Gastrocnemius medialis (tissue), 4 donors: ENCODE measurements at regions of chr1 and their contacts with region 1.

Region 1: GRCh38 chr1:150561974-150562445 is 12.8 kb downstream of the ADAMTSL4 start:
- DNase-seq: peak; percentile 94
- ATAC-seq: peak; percentile 54 to 63
- H3K4me3 ChIP-seq: peak overlapping the region; percentile 68 to 75 (median 71)
- H3K27ac ChIP-seq: peak overlapping the region; percentile 100
- H3K4me1 ChIP-seq: peaks cover 69 to 70% of the 10 kb centered on the region in 2 donors
- H3K27me3 ChIP-seq: no peaks in the 10 kb centered on the region
- CTCF ChIP-seq: no peak
- POLR2A ChIP-seq: no peak

Region 2: GRCh38 chr1:150281837-150282653 is 280.0 kb before region 1 on chr1 and contains the start of gene CIART:
- in situ Hi-C with region 1: no loop called
- intact Hi-C with region 1: loop called (anchors 5 kb)
- DNase-seq: peak; percentile 97 to 99
- ATAC-seq: peak; percentile 88 to 91
- H3K4me3 ChIP-seq: peak within 1 kb of the TSS; percentile 59 to 80 (median 72)
- H3K27ac ChIP-seq: peak within 1 kb of the TSS; percentile 93 to 97 (median 95)
- H3K4me1 ChIP-seq: peaks cover 27 to 34% of the 10 kb centered on the region in 2 donors
- H3K27me3 ChIP-seq: no peaks in the 10 kb centered on the region
- CTCF ChIP-seq: no peak
- POLR2A ChIP-seq: peak; percentile 67 to 77
- total RNA-seq, gene CIART: 8.2 to 15.8 (median 11.7) TPM

Region 3: GRCh38 chr1:150486964-150487762 is 74.8 kb before region 1 on chr1 and contains the start of gene TARS2:
- in situ Hi-C with region 1: no loop called
- intact Hi-C with region 1: loop called (anchors 2 kb)
- DNase-seq: peak; percentile 96 to 97
- ATAC-seq: peak; percentile 100
- H3K4me3 ChIP-seq: peak within 1 kb of the TSS; percentile 79 to 96 (median 88)
- H3K27ac ChIP-seq: peak within 1 kb of the TSS; percentile 86 to 94 (median 88)
- H3K4me1 ChIP-seq: peaks cover 12 to 13% of the 10 kb centered on the region in 2 donors
- H3K27me3 ChIP-seq: no peaks in the 10 kb centered on the region
- CTCF ChIP-seq: peak in 4 of 5 experiments; percentile 45 to 49 (median 48)
- POLR2A ChIP-seq: peak; percentile 35 to 43
- total RNA-seq, gene TARS2: 15.0 to 26.7 (median 18.4) TPM

Region 4: DNA sequence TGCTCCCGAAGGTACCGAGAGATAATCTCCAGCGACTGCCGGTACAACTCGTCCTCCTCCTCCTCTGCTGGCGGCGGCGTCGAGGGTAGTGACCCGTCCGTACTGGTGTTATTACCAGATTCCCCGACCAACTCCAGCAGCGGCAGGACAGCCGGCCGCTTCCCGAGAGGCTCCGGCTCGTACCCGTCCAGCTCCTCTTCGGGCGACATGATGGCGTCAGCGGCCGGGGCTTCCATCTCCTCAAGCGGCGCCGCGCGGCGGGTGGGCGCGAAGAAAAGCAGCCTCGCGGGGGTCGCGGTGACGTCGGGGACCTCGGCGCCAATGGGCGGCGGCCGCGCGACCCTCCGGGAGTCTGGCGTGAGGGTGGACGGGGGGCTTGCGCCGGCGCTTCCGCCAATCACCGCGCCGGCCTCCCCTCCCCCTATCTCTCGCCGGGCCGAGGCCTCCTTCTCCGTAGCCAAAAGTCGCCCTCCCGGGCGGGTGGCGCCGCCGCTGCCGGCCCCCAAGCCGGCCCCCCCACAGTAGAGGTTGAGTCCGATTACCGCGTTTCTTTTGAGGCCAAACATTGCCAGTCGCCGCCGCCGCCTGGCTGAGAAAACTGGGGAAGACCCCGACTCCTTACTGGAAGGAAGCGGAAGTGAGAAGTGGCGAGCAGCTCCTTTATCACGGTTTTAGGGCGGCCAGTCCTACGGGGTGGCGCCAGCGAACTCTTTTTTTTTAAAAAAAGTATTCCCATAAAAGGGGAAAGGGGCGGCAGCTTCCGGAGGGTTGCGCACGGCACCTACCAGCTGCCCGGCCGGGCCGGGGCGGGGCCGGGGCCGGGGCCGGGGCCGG is 17.2 kb after region 1 on chr1 and contains the start of gene MCL1:
- in situ Hi-C with region 1: no loop called
- intact Hi-C with region 1: loop called (anchors 1 kb)
- DNase-seq: peak; percentile 94 to 95
- ATAC-seq: peak; percentile 68 to 71
- H3K4me3 ChIP-seq: peak within 1 kb of the TSS; percentile 67 to 98 (median 84)
- H3K27ac ChIP-seq: peak within 1 kb of the TSS; percentile 100
- H3K4me1 ChIP-seq: peaks cover 21 to 25% of the 10 kb centered on the region in 2 donors
- H3K27me3 ChIP-seq: no peaks in the 10 kb centered on the region
- CTCF ChIP-seq: peak in 2 of 5 experiments; percentile 27 to 32
- POLR2A ChIP-seq: peak; percentile 98 to 99
- total RNA-seq, gene MCL1: 136 to 199 (median 176) TPM

Region 5: DNA sequence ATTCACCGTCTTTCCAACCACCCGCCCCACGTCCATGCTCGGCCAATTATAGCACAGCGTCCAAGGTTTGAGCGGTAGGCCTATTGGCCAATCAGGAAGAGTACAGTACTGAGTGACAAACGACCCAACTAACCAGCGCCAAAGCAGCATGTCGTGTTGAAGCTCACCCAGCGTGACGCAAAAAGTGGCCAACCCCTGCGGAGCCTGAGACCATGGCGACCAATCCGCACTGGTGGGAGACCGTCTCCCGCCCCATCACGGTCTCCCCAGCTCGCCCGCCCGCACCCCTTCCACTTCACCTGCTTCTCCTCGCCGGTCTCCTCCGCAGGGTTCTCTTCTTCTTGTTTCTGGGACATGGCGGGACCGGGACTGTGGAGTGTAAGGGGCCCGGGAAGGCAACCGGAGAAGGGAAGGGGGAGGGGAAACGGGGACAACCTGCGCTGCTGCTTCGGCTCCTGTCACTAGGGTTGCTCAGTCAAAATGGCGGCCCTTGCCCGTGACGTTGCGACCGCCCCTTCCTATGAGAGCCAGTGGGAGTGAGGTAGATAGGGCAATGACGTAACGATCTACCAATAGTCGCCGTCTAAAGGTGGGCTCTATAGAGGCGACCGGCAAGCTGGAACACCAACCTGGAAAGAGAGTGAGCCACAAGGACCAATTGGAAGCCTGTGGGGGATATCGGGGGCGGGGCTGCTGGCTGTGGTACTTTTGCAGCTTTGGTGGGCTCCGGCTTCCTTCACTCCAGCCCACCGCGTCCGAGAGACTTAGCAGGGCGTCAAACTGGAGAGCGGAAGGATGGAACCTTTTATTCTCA is 67.3 kb after region 1 on chr1 and contains the start of gene ENSA:
- in situ Hi-C with region 1: loop called (anchors 5 to 10 kb)
- intact Hi-C with region 1: loop called (anchors 1 kb)
- DNase-seq: peak; percentile 99
- ATAC-seq: peak; percentile 94 to 97
- H3K4me3 ChIP-seq: peak within 1 kb of the TSS; percentile 77 to 92 (median 80)
- H3K27ac ChIP-seq: peak within 1 kb of the TSS; percentile 95 to 99 (median 97)
- H3K4me1 ChIP-seq: peaks cover 17 to 25% of the 10 kb centered on the region in 2 donors
- H3K27me3 ChIP-seq: no peaks in the 10 kb centered on the region
- CTCF ChIP-seq: no peak
- POLR2A ChIP-seq: peak; percentile 95 to 96
- total RNA-seq, gene ENSA: 164 to 302 (median 219) TPM

Region 6: GRCh38 chr1:150876119-150876454 is 314.1 kb after region 1 on chr1:
- in situ Hi-C with region 1: no loop called
- intact Hi-C with region 1: loop called (anchors 10 kb)
- DNase-seq: peak in 1 of 2 donors; percentile 59
- ATAC-seq: peak; percentile 35 to 53
- H3K4me3 ChIP-seq: peak overlapping the region; percentile 95 to 100 (median 99)
- H3K27ac ChIP-seq: peak overlapping the region; percentile 99 to 100 (median 100)
- H3K4me1 ChIP-seq: peaks cover 15 to 19% of the 10 kb centered on the region in 2 donors
- H3K27me3 ChIP-seq: no peaks in the 10 kb centered on the region
- CTCF ChIP-seq: no peak
- POLR2A ChIP-seq: no peak

Region 7: DNA sequence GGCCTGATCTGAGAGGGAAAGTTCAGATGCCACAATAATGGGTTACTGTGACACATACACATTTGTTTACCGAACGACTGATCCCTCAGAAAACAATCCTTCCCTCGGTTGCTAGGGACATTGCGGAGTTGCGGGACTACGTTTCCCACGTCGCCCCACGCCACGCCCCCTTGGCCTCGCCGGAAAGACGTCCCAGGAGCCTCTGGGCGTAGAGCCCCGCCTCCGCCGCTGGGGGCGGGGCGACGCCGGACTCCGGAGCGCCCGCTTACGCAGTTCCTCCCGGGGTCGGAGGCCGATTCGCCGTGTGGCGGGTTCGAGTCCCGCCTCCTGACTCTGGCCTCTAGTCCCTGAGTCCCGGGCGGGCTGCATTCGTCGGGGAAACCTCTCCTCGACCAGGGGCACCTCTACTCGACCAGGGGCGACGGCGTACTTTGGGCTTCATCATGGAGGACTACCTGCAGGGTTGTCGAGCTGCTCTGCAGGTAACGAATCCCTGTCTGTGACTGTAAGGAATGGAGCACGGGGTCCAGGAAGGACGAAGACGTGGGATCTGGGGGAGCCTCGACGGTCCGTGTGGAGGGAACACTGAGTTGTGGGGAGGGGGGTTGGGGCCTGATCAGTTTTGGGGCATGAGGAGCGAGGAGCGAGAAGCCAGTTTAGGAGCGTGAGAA is 446.3 kb after region 1 on chr1 and contains the start of gene PRUNE1:
- in situ Hi-C with region 1: no loop called
- intact Hi-C with region 1: loop called (anchors 5 kb)
- DNase-seq: peak; percentile 93 to 96
- ATAC-seq: peak; percentile 79 to 80
- H3K4me3 ChIP-seq: peak within 1 kb of the TSS; percentile 60 to 91 (median 86)
- H3K27ac ChIP-seq: peak within 1 kb of the TSS; percentile 89 to 95 (median 94)
- H3K4me1 ChIP-seq: peaks cover 54 to 62% of the 10 kb centered on the region in 2 donors
- H3K27me3 ChIP-seq: no peaks in the 10 kb centered on the region
- CTCF ChIP-seq: peak in 4 of 5 experiments; percentile 24 to 33 (median 26)
- POLR2A ChIP-seq: peak; percentile 65 to 72
- total RNA-seq, gene PRUNE1: 24.0 to 35.6 (median 29.1) TPM